Dendritic cell treated with granulocyte-macrophage colony-stimulating factor and Interleukin-4, amounts not matched to agents 40 ng/mL and 50 ng/mL, for 4 days (primary cell): ENCODE measurements at regions of chr12 and their contacts with region 1.

Region 1: GRCh38 chr12:39319187-39319586 is 123.7 kb downstream of the KIF21A start:
- H3K4me3 Mint-ChIP-seq: no peak overlapping the region
- H3K27ac Mint-ChIP-seq: no peak overlapping the region
- H3K4me1 Mint-ChIP-seq: no peaks in the 10 kb centered on the region
- H3K27me3 Mint-ChIP-seq: no peaks in the 10 kb centered on the region

Region 2: GRCh38 chr12:39435531-39435930 is 116.3 kb after region 1 on chr12:
- intact Hi-C with region 1: loop called (anchors 5 kb)
- H3K4me3 Mint-ChIP-seq: no peak overlapping the region
- H3K27ac Mint-ChIP-seq: no peak overlapping the region
- H3K4me1 Mint-ChIP-seq: no peaks in the 10 kb centered on the region
- H3K27me3 Mint-ChIP-seq: no peaks in the 10 kb centered on the region

Region 3: DNA sequence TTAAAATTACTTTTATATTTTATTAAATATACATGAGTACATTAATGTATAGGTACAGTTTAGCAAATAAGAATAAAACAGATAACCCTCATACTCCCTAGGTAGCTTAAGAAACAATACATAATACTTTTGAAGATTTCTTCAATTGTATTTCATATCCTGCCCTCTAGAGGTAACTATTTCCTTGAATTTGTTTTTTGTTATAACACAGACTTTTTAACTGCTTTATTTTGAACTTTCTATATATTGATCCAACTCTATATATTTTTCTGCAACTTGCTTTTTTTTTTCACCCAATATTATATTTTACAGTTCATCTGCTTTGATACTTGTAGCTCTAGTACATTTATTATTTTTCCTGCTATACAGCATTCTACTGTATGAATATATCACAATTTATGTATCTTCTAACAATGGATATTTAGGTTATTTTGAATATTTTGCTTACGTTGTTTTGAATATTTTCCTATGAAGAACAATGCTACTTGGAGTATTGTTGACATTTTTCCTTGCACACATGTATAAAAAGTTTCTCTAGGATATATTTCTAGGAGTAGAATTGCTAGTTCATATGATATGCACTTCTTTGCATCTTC is 373.2 kb after region 1 on chr12:
- intact Hi-C with region 1: loop called (anchors 10 kb)
- H3K4me3 Mint-ChIP-seq: no peak overlapping the region
- H3K27ac Mint-ChIP-seq: no peak overlapping the region
- H3K4me1 Mint-ChIP-seq: no peaks in the 10 kb centered on the region
- H3K27me3 Mint-ChIP-seq: no peaks in the 10 kb centered on the region

Region 4: GRCh38 chr12:39990122-39991101 is 671.2 kb after region 1 on chr12:
- intact Hi-C with region 1: loop called (anchors 5 kb)
- H3K4me3 Mint-ChIP-seq: no peak overlapping the region
- H3K27ac Mint-ChIP-seq: no peak overlapping the region
- H3K4me1 Mint-ChIP-seq: peaks cover 20% of the 10 kb centered on the region
- H3K27me3 Mint-ChIP-seq: no peaks in the 10 kb centered on the region